Right cardiac atrium (tissue), 5 donors: ENCODE measurements at regions of chr21 and their contacts with region 1.

Region 1: GRCh38 chr21:44939532-44940115 is at the start of gene SLX9:
- DNase-seq: peak; percentile 78 to 92 (median 90)
- ATAC-seq: peak; percentile 93 to 94
- H3K4me3 ChIP-seq: peak within 1 kb of the TSS; percentile 96
- H3K27ac ChIP-seq: no peak within 1 kb of the TSS
- H3K4me1 ChIP-seq: no peaks in the 10 kb centered on the region
- H3K27me3 ChIP-seq: no peaks in the 10 kb centered on the region
- total RNA-seq, gene SLX9: 19.2 to 26.5 (median 24.1) TPM

Region 2: DNA sequence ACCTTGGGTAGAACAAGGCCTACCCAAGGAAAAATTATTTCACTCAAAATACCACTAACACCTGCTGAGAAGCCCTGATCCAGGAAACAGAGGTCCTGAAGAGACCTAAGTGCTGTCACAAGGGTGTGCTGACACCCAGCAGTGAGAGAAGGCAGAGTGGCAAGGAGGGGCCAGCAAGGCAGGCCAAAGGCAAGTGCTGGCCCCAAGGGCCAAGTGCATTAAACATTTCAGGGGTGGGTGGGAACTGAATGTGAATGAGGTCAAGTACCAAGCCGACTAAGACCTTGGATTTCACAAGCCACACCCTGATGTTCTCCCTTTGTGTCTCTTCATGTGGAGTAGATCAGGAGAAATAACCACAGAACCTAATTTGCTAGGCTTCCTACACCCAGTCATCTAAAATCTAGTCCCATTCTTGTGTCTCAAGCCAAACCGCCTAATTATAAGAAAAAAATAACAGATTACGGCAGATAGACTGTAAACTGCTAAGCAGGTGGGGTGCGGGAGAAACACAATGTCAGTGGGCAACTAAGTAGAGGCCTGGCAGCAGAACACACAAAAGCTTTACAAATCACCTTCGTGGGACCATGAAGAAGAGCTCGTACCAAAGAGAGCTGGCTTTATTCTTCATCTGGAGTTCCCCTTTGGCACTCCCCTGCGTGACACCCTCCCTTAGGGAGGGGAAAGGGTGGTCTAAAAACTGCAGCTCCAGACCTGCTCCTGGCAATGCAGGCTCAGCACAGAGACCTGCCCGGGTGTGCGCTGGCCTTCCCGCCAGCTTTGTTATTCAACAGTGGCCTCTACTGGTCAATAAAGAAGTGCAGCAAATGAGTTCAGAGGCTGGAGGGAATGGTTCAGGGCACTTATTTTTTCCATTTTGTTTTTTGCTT is 146.7 kb before region 1 on chr21:
- intact Hi-C with region 1: loop called in 1 of 4 experiments (anchors 10 kb)
- DNase-seq: peak in 2 of 3 donors; percentile 76 to 79
- ATAC-seq: peak; percentile 86 to 87
- H3K4me3 ChIP-seq: no peak overlapping the region
- H3K27ac ChIP-seq: no peak overlapping the region
- H3K4me1 ChIP-seq: peaks cover 5% of the 10 kb centered on the region
- H3K27me3 ChIP-seq: no peaks in the 10 kb centered on the region

Region 3: DNA sequence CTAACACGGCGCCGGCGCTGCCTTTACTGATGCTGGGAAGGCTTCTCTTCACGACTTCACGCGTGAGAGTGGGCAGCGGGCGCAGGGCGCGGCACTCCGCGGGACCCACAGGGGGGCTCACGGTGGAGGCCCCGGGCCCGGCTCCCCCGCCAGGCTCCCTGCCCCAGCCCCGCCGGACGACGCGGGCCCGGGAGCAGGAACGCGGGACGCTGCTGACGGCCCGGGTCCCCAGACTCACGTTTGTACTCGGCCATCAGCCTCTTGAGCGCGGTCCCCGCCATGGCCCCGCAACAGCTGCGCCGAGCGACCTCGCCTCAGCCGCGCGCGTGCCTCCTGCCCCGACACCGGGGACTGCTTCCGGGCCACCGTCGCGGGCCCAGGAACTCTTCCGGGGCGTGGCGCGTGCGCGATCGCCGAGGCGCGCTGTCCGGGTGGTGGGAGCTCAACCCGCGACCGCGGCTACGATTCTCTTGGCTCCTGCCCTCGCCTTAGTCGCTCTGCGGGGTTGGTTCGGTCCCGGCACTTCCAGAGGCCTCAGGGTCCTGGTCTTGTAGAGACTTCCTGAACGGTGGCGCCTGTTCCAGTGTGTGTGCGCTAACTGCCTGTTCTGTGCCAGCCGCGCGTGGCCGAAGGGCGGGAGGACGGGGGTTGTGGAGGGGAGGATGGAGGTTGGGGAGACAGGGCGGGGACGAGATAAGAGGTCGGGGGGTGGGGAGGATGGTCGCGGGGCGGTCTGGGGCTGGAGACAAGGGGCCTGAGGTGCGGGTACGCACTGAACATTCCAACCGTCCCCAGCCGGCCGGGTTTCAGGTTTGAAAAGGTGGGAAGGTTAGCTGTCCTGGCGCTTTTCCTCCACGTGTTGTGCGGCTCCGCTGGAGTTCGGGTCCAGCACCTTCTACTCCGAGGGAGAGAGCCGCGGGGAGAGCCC is 137.9 kb before region 1 on chr21 and contains the start of gene UBE2G2:
- intact Hi-C with region 1: loop called (anchors 10 kb)
- DNase-seq: peak; percentile 84 to 94 (median 92)
- ATAC-seq: peak; percentile 96 to 97
- H3K4me3 ChIP-seq: peak within 1 kb of the TSS; percentile 92
- H3K27ac ChIP-seq: peak within 1 kb of the TSS; percentile 32
- H3K4me1 ChIP-seq: peaks cover 3% of the 10 kb centered on the region
- H3K27me3 ChIP-seq: no peaks in the 10 kb centered on the region
- total RNA-seq, gene UBE2G2: 57.0 to 69.8 (median 64.7) TPM

Region 4: DNA sequence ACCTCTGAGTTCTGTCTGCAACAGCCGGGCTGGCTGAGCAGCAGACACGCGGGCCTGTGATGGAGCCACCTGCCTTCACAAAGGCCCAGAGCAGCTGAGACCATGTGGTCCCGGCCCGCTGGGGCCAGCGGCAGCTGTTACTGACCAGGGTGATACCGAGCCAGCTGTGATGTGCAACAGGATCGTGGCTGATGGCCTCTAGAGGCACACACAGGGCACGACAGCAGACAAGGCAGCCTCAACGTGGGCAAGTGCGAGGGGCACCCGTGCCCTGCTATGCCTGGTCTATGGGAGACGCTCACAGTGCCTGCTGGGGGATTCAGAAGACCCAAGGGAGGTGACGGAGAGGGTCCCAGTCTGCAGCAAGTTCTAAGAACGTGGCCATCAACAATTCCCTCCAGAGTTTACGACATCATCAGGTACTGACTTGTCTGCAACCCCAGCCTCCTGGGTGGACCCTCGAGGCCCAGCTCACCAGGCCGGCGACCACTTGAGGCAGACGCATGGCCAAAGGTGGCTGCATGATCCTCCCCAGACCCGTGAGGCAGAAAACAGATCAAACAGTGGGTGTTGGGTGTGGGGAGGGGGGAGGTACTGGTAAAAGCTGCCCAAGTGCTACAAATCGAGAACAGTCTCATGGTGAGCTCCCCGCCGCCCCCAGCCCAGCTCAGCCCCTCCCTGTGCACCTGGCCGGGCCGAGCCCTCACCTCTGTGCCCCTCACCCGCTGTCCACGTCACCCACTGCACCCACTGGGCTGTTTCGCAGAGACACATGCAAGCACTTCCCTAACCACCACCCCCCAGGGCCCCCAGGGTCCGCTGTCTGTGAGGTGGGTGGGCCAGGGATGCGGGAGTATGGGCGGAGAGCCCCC is 342.0 kb after region 1 on chr21:
- intact Hi-C with region 1: no loop called
- DNase-seq: peak; percentile 13 to 46 (median 34)
- ATAC-seq: peak in 1 of 2 donors; percentile 10
- H3K4me3 ChIP-seq: no peak overlapping the region
- H3K27ac ChIP-seq: no peak overlapping the region
- H3K4me1 ChIP-seq: no peaks in the 10 kb centered on the region
- H3K27me3 ChIP-seq: no peaks in the 10 kb centered on the region

Region 5: GRCh38 chr21:45363921-45364467 is 424.4 kb after region 1 on chr21:
- intact Hi-C with region 1: no loop called
- DNase-seq: peak; percentile 92 to 95 (median 93)
- ATAC-seq: peak; percentile 81 to 85
- H3K4me3 ChIP-seq: no peak overlapping the region
- H3K27ac ChIP-seq: peak overlapping the region; percentile 97
- H3K4me1 ChIP-seq: peaks cover 9% of the 10 kb centered on the region
- H3K27me3 ChIP-seq: no peaks in the 10 kb centered on the region